Mucosa of descending colon (tissue), 3 donors: ENCODE measurements at regions of chr13 and their contacts with region 1.

Region 1: DNA sequence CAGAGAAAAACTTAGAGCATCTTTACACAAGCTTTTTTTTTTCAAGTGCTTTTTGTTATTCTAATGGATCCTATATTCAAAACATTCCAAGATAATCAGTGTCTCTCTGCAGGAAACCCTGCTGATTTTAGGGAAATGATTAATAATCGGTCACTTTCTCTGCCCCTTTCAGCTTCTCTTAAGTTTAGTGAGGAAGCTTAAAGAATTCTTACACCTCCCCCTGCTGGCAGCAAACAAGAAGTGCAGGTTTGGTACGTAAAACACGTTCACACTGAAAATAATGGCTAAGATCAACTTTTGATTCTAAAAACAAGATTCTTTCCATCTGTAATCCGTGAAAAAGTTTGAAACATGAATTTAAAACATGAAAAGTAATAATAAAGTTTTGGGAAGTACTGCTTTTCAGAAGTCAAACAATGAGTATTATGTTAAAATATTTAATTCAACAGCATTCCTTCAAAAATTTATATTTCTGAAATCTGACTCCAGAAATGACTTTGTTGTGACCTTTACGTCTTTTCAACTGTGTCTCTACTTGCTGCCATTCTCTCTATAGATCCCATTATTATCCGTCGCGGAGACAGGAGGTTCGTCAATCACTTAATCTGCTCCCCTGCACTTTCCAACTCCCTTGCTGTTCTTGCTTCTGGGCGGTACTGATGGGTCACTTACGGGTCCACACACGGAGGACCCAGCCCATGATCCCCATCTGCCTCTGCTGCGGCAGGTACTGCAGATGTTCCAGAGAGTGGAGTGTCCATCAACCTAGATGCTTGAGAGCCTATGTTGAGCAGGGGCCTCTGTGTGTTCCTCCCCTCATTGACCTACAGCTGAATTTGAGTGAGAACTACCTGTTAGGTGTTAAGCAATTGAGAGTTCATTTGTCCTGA is 203.1 kb upstream of the EDNRB start:
- DNase-seq: peak in 1 of 3 donors; percentile 41
- ATAC-seq: peak; percentile 35
- H3K4me3 ChIP-seq: no peak overlapping the region
- H3K4me1 ChIP-seq: no peaks in the 10 kb centered on the region
- CTCF ChIP-seq: peak; percentile 69

Region 2: GRCh38 chr13:77696006-77696878 is 425.5 kb before region 1 on chr13:
- intact Hi-C with region 1: no loop called
- DNase-seq: no peak
- ATAC-seq: no peak
- H3K4me3 ChIP-seq: no peak overlapping the region
- H3K4me1 ChIP-seq: peaks cover 11% of the 10 kb centered on the region
- CTCF ChIP-seq: no peak

Region 3: GRCh38 chr13:77774181-77774580 is 347.5 kb before region 1 on chr13:
- intact Hi-C with region 1: loop called in 1 of 2 experiments (anchors 5 kb)
- DNase-seq: no peak
- ATAC-seq: no peak
- H3K4me3 ChIP-seq: no peak overlapping the region
- H3K4me1 ChIP-seq: no peaks in the 10 kb centered on the region
- CTCF ChIP-seq: no peak

Region 4: DNA sequence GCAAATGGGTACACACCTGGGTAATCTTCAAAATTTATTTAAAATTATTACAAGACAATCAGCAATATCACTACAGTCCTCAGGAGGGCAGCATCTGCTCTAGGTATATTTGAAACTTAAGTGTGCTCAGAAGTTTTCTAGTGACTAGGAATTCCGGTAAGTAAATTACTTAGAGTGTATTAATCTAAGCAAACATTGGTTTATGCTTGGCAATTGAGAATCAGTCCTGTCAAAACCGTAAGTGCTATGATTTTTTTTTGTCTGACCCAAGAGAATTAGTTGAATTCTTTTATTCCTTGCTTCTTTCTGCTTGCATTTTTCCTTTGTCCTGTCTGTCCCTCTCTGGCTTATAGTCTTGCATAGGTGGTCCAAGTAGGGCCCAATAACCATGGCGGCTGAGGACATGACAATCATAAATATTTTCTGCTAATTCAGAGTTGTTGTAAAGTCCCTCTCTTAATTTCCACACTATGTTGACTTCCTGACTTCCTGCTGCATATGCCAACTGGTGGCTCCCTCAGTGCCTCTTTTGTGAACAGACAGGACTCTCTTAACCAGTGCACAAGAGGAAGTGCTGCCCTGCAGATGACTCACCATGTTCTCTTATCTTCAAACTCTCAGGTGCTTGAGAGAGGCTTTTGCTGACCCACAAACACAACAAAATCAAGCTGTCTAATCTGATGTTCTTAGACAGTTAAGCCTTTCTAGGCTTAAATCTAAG is 342.0 kb before region 1 on chr13:
- intact Hi-C with region 1: loop called (anchors 5 kb)
- DNase-seq: peak in 1 of 3 donors; percentile 52
- ATAC-seq: peak; percentile 80
- H3K4me3 ChIP-seq: no peak overlapping the region
- H3K4me1 ChIP-seq: no peaks in the 10 kb centered on the region
- CTCF ChIP-seq: peak; percentile 36